ENCODE measurements at regions of chr15 and their contacts with region 1.

Region 1: DNA sequence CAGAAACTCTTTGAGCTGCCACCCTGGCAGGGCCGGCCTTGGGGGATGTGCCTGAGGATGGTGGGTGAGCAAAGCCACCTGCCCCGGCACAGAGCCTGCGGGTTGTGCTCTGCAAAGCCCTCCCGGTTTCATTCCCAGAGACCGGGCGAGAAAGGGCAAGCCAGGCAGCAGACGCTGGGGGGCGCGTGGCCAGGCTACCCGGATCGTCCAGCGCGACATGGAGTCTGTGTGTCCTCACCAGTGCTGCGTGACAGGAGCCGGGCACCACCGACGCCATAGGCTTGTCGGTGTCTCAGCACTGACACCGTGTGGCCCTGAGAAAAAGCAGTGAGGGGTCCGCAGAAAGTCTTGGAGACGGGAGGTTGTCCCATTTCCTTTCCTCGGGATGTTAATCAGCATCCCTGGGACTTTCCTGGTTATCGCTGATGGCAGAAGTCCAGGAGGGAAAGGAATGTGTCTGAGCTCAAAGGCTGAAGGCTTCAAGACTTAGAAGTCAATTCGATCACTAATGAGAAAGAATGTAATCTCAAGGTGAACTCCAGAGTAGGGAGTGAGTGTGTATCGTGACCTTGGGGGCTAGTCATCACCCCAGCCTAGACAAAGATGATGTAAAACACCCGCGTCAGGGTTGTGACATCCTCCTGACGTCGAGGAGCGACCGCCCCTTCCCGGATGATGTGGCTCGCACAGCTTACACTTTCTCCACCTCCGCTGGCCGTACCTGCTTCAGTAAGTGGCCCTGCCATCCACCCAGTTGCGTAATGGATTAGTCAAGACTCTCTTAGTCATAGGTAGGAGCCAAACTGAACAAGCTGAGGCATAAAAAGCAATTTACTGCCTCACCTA is 36.3 kb upstream of the PLA2G4E start:
- DNase-seq: peak; percentile 85 to 96
- H3K4me3 ChIP-seq: peak overlapping the region; percentile 58; the same call in 1 of the 2 replicates
- H3K27ac ChIP-seq: peak overlapping the region; percentile 86
- H3K4me1 ChIP-seq: peaks cover 13% of the 10 kb centered on the region
- H3K27me3 ChIP-seq: no peaks in the 10 kb centered on the region
- CTCF ChIP-seq: peak; percentile 61; the same call in 1 of the 2 replicates

Region 2: DNA sequence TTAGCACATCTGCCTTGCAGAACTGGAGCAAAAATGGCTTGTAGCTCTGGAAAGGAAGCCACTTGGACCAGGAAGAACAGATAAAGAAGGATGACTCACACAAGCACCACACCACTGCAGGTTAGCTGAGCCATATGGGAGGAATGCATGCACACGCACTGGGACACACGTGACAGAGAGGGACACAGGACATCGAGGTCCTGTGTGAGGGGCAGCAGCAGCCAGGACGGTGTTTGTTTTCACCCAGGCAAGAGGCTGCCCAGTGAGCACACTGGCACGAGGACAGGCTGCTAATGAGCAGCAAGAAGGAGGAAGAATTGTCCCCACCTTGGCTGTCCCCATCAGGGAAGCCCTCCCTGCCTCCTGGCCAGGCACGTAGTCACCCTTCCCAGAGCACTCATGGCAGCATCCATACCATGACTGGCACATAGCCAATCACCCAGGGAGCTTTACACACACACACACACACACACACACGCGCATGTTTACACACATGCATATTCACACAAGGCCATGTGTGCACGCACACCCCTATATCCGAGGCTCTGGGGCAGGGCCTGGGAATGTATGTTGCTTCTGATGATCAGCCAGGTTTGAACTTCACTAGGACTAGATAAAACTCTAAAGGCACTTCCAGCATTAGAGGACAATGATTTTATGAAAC is 139.3 kb before region 1 on chr15:
- CTCF ChIA-PET with region 1: no interaction called
- POLR2A ChIA-PET with region 1: no interaction called
- intact Hi-C with region 1: loop called (anchors 10 kb)
- DNase-seq: peak; percentile 70 to 81
- H3K4me3 ChIP-seq: no peak overlapping the region
- H3K27ac ChIP-seq: no peak overlapping the region
- H3K4me1 ChIP-seq: peaks cover 10% of the 10 kb centered on the region; the same call in 1 of the 2 replicates
- H3K27me3 ChIP-seq: no peaks in the 10 kb centered on the region
- CTCF ChIP-seq: no peak

Region 3: GRCh38 chr15:41930221-41930866 is 126.8 kb before region 1 on chr15:
- CTCF ChIA-PET with region 1: interaction called, 4 read pairs
- POLR2A ChIA-PET with region 1: no interaction called
- intact Hi-C with region 1: loop called (anchors 2 kb)
- DNase-seq: peak; percentile 47 to 77
- H3K4me3 ChIP-seq: no peak overlapping the region
- H3K27ac ChIP-seq: peak overlapping the region; percentile 42
- H3K4me1 ChIP-seq: peaks cover 66% of the 10 kb centered on the region
- H3K27me3 ChIP-seq: no peaks in the 10 kb centered on the region
- CTCF ChIP-seq: 0 out of 2 replicates have a peak, but pooled peaks have one; percentile 13

Region 4: GRCh38 chr15:41989259-41989933 is 67.8 kb before region 1 on chr15:
- CTCF ChIA-PET with region 1: interaction called, 4 read pairs
- POLR2A ChIA-PET with region 1: interaction called, 25 read pairs
- intact Hi-C with region 1: loop called (anchors 1 kb)
- DNase-seq: peak; percentile 43 to 85
- H3K4me3 ChIP-seq: no peak overlapping the region
- H3K27ac ChIP-seq: no peak overlapping the region
- H3K4me1 ChIP-seq: no peaks in the 10 kb centered on the region
- H3K27me3 ChIP-seq: no peaks in the 10 kb centered on the region
- CTCF ChIP-seq: peak; percentile 88

Measured in PC-9 (cell line).